ENCODE measurements at regions of chr6 and their contacts with region 1.

Region 1: GRCh38 chr6:33620856-33621710 is at the start of gene ITPR3:
- DNase-seq: peak; percentile 32
- H3K4me3 ChIP-seq: peak within 1 kb of the TSS; percentile 78 to 93 (median 78)
- H3K27ac ChIP-seq: peak within 1 kb of the TSS; percentile 62
- H3K4me1 ChIP-seq: peaks cover 15% of the 10 kb centered on the region
- H3K27me3 ChIP-seq: no peaks in the 10 kb centered on the region
- CTCF ChIP-seq: no peak
- POLR2A ChIP-seq: peak; percentile 9
- total RNA-seq, gene ITPR3: 40.5 and 52.2 TPM in 2 replicates

Region 2: DNA sequence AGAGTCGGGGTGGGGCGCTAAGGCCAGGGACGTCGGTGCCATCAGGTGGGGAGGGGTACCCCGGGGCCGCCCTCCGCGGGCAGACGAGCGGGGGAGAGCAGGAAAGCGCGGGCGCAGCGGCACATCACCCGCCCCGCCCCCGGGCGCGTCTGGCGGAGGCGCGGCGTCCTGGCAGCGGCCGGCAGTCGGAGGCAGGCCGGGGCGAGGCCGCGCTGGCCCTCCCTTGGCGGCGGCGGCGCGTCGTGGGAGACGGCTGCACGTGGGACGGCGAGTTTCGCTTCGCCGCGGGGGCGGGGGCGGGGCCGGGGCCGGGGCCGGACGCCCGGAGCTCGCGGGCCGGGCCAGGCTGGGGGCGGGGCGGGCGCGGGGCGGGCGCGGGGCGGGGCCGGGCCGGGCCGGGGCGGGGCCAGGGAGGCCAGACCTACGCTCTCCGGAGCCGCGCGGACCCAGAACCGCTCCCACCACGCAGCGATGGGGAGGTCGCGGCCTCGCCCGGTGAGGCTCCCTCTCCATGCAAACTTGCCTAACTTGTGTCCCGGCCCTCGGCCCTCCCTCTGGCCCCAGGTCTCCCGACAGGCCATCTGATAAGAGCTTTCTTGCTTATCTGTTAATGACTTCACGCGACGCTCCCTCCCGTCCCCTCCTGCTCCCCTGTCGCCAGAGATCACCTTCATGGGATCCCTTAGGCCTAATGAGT is 12.5 kb after region 1 on chr6:
- CTCF ChIA-PET with region 1: interaction called, 29 read pairs
- POLR2A ChIA-PET with region 1: interaction called, 4 read pairs
- dilution Hi-C with region 1: no loop called
- intact Hi-C with region 1: loop called (anchors 1 kb)
- DNase-seq: peak; percentile 66
- H3K4me3 ChIP-seq: peak overlapping the region; percentile 33 to 68 (median 35)
- H3K27ac ChIP-seq: no peak overlapping the region
- H3K4me1 ChIP-seq: peaks cover 23% of the 10 kb centered on the region
- H3K27me3 ChIP-seq: no peaks in the 10 kb centered on the region
- CTCF ChIP-seq: no peak
- POLR2A ChIP-seq: peak; percentile 39

Measured in endothelial cell of umbilical vein (primary cell).